ENCODE measurements at regions of chrX and their contacts with region 1.

Region 1: GRCh38 chrX:40877887-40878286 is 142.5 kb upstream of the MED14 start:
- DNase-seq: peak in 4 of 42 donors; percentile 2 to 34 (median 10)

Region 2: GRCh38 chrX:41116948-41117347 is 239.1 kb after region 1 on chrX:
- intact Hi-C with region 1: loop called (anchors 10 kb)
- DNase-seq: no peak

Region 3: GRCh38 chrX:41209853-41210252 is 332.0 kb after region 1 on chrX:
- intact Hi-C with region 1: no loop called
- DNase-seq: no peak

Measured in head of caudate nucleus (tissue), 42 donors.